CD14-positive monocyte (primary cell): ENCODE measurements at regions of chr15 and their contacts with region 1.

Region 1: GRCh38 chr15:70111203-70112073 is 13.7 kb upstream of the TLE3 start:
- DNase-seq: no peak
- H3K4me3 ChIP-seq: no peak overlapping the region
- H3K4me3 Mint-ChIP-seq: peak overlapping the region in 1 of 2 donors; percentile 4
- H3K27ac ChIP-seq: no peak overlapping the region
- H3K27ac Mint-ChIP-seq: no peak overlapping the region
- H3K4me1 ChIP-seq: peaks cover 40 to 41% of the 10 kb centered on the region in 2 donors
- H3K4me1 Mint-ChIP-seq: peaks cover 51% of the 10 kb centered on the region
- H3K27me3 ChIP-seq: no peaks in the 10 kb centered on the region
- H3K27me3 Mint-ChIP-seq: peaks cover 3 to 13% (median 8%) of the 10 kb centered on the region in 3 donors
- CTCF ChIP-seq: no peak

Region 2: DNA sequence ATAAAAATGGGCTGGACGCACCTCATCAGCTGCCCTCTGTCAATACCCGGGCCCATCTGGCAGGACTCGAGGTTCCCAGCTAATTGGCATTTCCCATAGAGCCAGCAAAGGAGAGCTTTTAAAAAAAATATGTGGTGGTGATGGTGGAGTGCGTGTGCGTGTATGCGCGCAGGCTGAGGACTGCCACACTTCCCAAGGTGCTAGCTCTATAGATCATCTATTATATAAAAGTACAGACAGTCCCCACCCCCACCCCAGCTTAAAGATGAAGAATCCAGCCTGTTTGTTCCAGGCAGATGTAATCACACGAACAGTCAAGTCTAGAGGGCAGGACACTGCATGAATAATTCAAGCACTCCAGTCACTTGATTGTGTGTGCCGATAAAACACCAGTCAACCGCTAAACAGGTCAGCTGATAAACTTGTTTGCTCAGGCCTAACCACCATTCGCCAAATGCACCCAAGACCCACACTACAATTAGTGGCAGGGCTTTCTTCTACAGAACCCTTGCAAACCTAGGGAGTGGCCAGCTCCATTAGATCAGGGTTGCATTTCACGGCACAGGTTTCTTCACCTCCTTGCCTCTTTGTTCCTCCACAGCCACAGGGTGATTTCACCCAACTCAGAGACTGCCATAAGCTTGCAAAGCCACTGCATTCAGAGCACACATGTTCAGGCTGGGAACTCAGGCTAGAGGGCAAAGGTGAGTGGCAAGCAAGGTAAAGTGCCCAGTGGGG is 19.5 kb before region 1 on chr15:
- intact Hi-C with region 1: no loop called
- DNase-seq: no peak
- H3K4me3 ChIP-seq: no peak overlapping the region
- H3K4me3 Mint-ChIP-seq: peak overlapping the region; percentile 39 to 99
- H3K27ac ChIP-seq: no peak overlapping the region
- H3K27ac Mint-ChIP-seq: no peak overlapping the region
- H3K4me1 ChIP-seq: peaks cover 35 to 48% of the 10 kb centered on the region in 2 donors
- H3K4me1 Mint-ChIP-seq: peaks cover 71% of the 10 kb centered on the region
- H3K27me3 ChIP-seq: peaks cover 0 to 6% of the 10 kb centered on the region in 2 donors
- H3K27me3 Mint-ChIP-seq: peaks cover 5 to 14% (median 6%) of the 10 kb centered on the region in 3 donors
- CTCF ChIP-seq: no peak

Region 3: DNA sequence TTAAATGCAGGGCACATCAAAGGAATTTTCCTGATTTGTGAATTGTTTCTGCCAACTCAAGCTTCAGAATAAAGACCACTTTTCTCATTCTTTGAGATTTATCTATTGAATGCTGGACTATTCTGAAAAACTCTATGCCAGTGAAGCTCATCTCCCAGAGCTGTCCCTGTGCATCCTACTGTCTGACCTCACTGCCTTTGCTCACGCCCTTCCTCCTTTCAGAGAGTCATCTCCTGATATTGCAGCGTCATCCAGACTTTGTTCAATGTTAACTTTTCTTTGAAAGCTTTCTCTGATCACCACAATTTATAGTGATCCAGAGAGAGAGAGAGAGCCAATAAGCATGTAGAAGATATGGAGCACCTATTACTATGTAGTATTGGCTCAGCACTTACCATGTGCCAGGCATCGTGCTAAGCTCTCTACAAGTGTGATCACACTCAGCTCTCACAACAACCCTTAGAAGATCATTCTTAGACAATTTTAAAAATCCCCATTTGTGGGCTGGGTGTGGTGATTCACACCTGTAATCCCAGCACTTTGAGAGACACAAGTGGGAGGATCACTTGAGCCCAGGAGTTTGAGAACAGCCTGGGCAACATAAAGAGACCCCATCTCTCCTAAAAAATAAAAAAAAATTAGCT is 16.5 kb after region 1 on chr15:
- intact Hi-C with region 1: loop called in 1 of 2 experiments (anchors 2 kb)
- DNase-seq: peak; percentile 16 to 49 (median 33)
- H3K4me3 ChIP-seq: no peak overlapping the region
- H3K4me3 Mint-ChIP-seq: no peak overlapping the region
- H3K27ac ChIP-seq: no peak overlapping the region
- H3K27ac Mint-ChIP-seq: peak overlapping the region in 3 of 7 donors; percentile 2 to 75 (median 11)
- H3K4me1 ChIP-seq: peaks cover 0 to 4% of the 10 kb centered on the region in 2 donors
- H3K4me1 Mint-ChIP-seq: peaks cover 16% of the 10 kb centered on the region
- H3K27me3 ChIP-seq: no peaks in the 10 kb centered on the region
- H3K27me3 Mint-ChIP-seq: peaks cover 9 to 12% (median 11%) of the 10 kb centered on the region in 3 donors
- CTCF ChIP-seq: no peak